T-cell (primary cell): ENCODE measurements at regions of chr3 and their contacts with region 1.

Region 1: GRCh38 chr3:112642912-112643506 is 2.1 kb upstream of the CCDC80 start:
- DNase-seq: peak; percentile 57 to 89 (median 74)
- ATAC-seq: peak; percentile 92 to 100 (median 97)
- H3K4me3 ChIP-seq: peak overlapping the region in 1 of 2 donors; percentile 28
- H3K4me3 Mint-ChIP-seq: peak overlapping the region; percentile 44 to 72 (median 66)
- H3K27ac ChIP-seq: no peak overlapping the region
- H3K27ac Mint-ChIP-seq: peak overlapping the region in 1 of 2 donors; percentile 44
- H3K4me1 ChIP-seq: peaks cover 2 to 16% of the 10 kb centered on the region in 2 experiments
- H3K4me1 Mint-ChIP-seq: peaks cover 13 to 19% (median 14%) of the 10 kb centered on the region in 3 donors
- H3K27me3 ChIP-seq: peaks cover 0 to 16% of the 10 kb centered on the region in 2 experiments
- H3K27me3 Mint-ChIP-seq: peaks cover 0 to 5% of the 10 kb centered on the region in 2 donors

Region 2: DNA sequence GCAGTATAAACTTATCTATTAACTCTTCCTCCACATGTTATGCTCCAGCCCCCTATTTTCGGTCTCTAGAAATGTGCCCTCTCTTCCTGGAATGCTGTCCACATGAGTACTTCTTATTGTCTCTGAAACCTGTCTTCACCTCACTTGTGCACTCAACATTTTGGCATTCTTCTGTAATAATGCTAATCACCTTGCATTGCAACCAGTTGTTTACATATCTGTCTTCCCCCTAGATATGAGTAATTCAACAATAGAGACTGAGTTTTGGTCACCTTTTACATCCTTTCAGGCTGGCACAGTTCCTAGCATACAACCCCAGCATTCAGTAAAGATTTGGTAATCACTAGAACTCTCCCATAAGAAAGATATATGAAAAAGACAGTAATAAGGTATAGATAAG is 19.3 kb before region 1 on chr3:
- CTCF ChIA-PET with region 1: no interaction called
- POLR2A ChIA-PET with region 1: no interaction called
- DNase-seq: no peak
- ATAC-seq: no peak
- H3K4me3 ChIP-seq: no peak overlapping the region
- H3K4me3 Mint-ChIP-seq: no peak overlapping the region
- H3K27ac ChIP-seq: no peak overlapping the region
- H3K27ac Mint-ChIP-seq: no peak overlapping the region
- H3K4me1 ChIP-seq: no peaks in the 10 kb centered on the region
- H3K4me1 Mint-ChIP-seq: no peaks in the 10 kb centered on the region
- H3K27me3 ChIP-seq: no peaks in the 10 kb centered on the region
- H3K27me3 Mint-ChIP-seq: peaks cover 0 to 5% of the 10 kb centered on the region in 2 donors

Region 3: DNA sequence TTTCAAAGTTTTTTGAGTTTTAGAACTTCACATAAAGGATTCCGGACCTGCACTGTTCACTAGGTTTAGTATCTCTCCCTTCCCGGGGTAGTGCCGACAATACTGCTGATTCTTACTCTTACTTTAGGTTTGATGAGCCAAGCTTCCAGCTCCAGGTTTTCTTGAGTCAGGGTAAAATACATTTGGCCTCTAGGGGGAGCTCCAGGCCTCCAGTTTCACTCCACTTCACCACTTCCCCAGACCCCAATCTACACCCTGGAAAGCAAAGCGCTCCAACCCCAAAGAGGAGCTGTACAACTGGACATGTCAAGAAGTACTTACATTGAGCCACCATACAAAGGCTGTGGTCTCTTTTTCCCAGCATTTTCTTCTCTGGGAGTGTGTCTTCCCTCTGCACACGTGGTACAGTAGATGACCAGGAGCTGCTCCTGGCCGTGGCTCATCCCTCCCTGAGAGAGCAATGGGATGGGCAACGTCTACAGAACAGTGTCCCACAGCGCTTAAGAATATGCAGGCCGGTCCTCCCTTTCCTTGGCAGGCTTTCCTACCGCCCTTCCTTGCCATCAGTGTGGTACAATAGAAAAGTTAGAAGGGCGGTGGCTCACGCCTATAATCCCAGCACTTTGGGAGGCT is 91.8 kb after region 1 on chr3:
- CTCF ChIA-PET with region 1: interaction called, 4 to 17 read pairs
- POLR2A ChIA-PET with region 1: no interaction called
- DNase-seq: peak; percentile 16 to 84 (median 52)
- ATAC-seq: peak; percentile 48 to 71 (median 55)
- H3K4me3 ChIP-seq: no peak overlapping the region
- H3K4me3 Mint-ChIP-seq: peak overlapping the region in 1 of 3 donors; percentile 13
- H3K27ac ChIP-seq: no peak overlapping the region
- H3K27ac Mint-ChIP-seq: peak overlapping the region in 1 of 2 donors; percentile 3
- H3K4me1 ChIP-seq: peaks cover 22 to 34% of the 10 kb centered on the region in 2 experiments
- H3K4me1 Mint-ChIP-seq: peaks cover 41 to 44% (median 44%) of the 10 kb centered on the region in 3 donors
- H3K27me3 ChIP-seq: no peaks in the 10 kb centered on the region
- H3K27me3 Mint-ChIP-seq: no peaks in the 10 kb centered on the region

Region 4: GRCh38 chr3:112973325-112974177 is 330.5 kb after region 1 on chr3:
- CTCF ChIA-PET with region 1: interaction called, 7 to 49 read pairs
- POLR2A ChIA-PET with region 1: interaction called in 1 of 2 experiments, 3 read pairs
- DNase-seq: peak in 27 of 35 experiments; percentile 11 to 69 (median 24)
- ATAC-seq: peak; percentile 70 to 88 (median 80)
- H3K4me3 ChIP-seq: peak overlapping the region; percentile 62 to 68
- H3K4me3 Mint-ChIP-seq: peak overlapping the region; percentile 91 to 98 (median 95)
- H3K27ac ChIP-seq: peak overlapping the region; percentile 83
- H3K27ac Mint-ChIP-seq: peak overlapping the region; percentile 95 to 98
- H3K4me1 ChIP-seq: peaks cover 32 to 52% of the 10 kb centered on the region in 2 experiments
- H3K4me1 Mint-ChIP-seq: peaks cover 83 to 98% (median 86%) of the 10 kb centered on the region in 3 donors
- H3K27me3 ChIP-seq: no peaks in the 10 kb centered on the region
- H3K27me3 Mint-ChIP-seq: no peaks in the 10 kb centered on the region

Region 5: GRCh38 chr3:113035387-113035982 is 392.5 kb after region 1 on chr3:
- CTCF ChIA-PET with region 1: interaction called, 4 to 15 read pairs
- POLR2A ChIA-PET with region 1: no interaction called
- DNase-seq: peak in 15 of 35 experiments; percentile 4 to 73 (median 23)
- ATAC-seq: peak; percentile 74 to 82 (median 76)
- H3K4me3 ChIP-seq: no peak overlapping the region
- H3K4me3 Mint-ChIP-seq: no peak overlapping the region
- H3K27ac ChIP-seq: no peak overlapping the region
- H3K27ac Mint-ChIP-seq: no peak overlapping the region
- H3K4me1 ChIP-seq: no peaks in the 10 kb centered on the region
- H3K4me1 Mint-ChIP-seq: no peaks in the 10 kb centered on the region
- H3K27me3 ChIP-seq: no peaks in the 10 kb centered on the region
- H3K27me3 Mint-ChIP-seq: no peaks in the 10 kb centered on the region